ENCODE measurements at regions of chr5 and their contacts with region 1.

Region 1: DNA sequence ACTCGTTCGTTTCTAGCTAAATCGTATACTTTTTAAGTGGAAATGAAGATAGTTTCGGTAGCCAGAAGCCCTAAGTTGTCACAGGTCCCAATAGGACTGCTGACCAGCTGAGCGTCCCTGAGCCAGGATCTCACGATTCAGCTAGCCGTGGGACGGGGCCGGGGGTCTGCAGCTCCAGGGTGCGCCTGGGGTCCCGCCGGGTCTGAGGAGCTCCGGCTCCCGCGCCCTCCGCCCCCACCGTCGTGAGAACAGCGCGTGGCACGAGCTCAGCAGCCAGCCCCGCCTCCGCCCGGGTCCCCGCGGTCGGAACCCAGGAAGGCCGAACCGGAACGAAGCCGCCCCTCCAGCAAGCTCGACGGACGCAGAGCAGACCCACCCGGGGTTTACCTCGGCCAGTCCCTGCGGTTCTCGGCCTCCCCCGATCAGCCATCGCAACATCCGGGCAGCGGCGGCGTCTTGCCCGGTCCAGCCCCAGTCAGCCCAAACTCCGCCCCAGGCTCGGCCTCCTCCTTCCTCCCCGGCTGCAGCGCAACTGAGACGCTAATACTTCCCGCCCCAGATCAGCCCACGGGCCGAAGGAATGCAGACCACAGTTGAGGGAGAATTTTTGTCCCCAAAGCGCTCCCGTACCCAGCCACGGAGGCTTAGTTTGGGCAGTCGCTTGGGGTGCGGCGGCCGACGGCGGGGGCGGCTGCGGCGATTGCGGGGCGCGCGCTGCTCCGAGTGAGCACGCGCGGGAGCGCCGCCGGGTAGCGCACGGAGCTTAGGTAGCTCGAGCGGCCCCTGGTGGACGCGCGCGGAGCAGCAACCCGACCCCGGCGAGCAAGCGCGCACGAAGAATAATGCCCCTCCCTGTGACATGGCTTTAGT is at the start of gene WDR41:
- DNase-seq: peak; percentile 83
- H3K4me3 Mint-ChIP-seq: peak within 1 kb of the TSS; percentile 87
- H3K27ac Mint-ChIP-seq: peak within 1 kb of the TSS; percentile 91
- H3K4me1 Mint-ChIP-seq: peaks cover 35% of the 10 kb centered on the region
- H3K27me3 Mint-ChIP-seq: peaks cover 21% of the 10 kb centered on the region
- total RNA-seq, gene WDR41: 50.8 and 54.6 TPM in 2 replicates

Region 2: GRCh38 chr5:76867827-76868693 is 624.0 kb before region 1 on chr5:
- intact Hi-C with region 1: loop called (anchors 10 kb)
- DNase-seq: peak; percentile 49
- H3K4me3 Mint-ChIP-seq: no peak overlapping the region
- H3K27ac Mint-ChIP-seq: no peak overlapping the region
- H3K4me1 Mint-ChIP-seq: no peaks in the 10 kb centered on the region
- H3K27me3 Mint-ChIP-seq: no peaks in the 10 kb centered on the region

Region 3: GRCh38 chr5:77030097-77031071 is 461.6 kb before region 1 on chr5 and contains the start of gene AGGF1:
- intact Hi-C with region 1: loop called (anchors 2 kb)
- DNase-seq: peak; percentile 90
- H3K4me3 Mint-ChIP-seq: peak within 1 kb of the TSS; percentile 98
- H3K27ac Mint-ChIP-seq: peak within 1 kb of the TSS; percentile 92
- H3K4me1 Mint-ChIP-seq: peaks cover 22% of the 10 kb centered on the region
- H3K27me3 Mint-ChIP-seq: peaks cover 7% of the 10 kb centered on the region
- total RNA-seq, gene AGGF1: 25.6 and 28.2 TPM in 2 replicates

Region 4: DNA sequence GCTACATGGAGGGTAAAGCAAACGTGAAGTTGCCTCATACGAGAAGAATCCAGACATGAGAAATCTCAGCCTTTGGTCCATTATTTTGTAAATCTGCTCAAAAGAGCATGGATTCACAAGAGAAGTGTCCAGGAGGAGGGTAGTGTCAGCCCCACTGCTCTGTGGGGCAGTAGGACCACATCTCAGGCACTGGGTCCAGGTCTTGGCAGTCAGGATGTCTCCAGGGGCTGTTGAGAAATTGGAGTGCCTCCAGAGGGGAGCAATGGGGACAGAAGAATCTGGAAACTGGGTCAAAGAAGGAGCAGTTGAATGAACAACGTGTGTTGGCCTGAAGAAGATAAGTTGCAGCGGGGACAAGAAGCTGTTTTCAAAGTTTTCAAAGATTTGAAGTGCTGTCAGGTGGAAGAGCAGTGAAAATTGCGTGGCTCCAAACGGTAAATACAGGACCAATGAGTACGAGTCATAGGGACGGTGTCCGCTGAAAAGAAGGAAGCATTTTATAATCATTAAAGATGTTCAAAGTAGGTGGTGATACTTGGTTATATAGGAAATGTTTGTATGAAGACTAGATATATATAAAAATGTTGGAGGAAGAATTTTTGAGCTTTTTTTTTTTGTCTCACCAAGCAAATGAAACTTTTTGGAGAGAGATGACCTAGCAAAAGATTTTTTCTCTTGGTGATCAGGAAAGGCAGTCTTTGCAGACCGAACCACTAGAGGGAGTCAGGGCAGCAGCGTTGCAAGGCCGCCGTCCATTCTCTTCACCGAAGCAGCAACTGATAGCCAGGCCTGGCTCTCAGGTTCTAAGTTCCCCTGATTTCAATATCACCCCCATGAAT is 347.8 kb before region 1 on chr5:
- intact Hi-C with region 1: loop called (anchors 1 kb)
- DNase-seq: peak; percentile 45
- H3K4me3 Mint-ChIP-seq: no peak overlapping the region
- H3K27ac Mint-ChIP-seq: no peak overlapping the region
- H3K4me1 Mint-ChIP-seq: peaks cover 18% of the 10 kb centered on the region
- H3K27me3 Mint-ChIP-seq: peaks cover 20% of the 10 kb centered on the region

Region 5: GRCh38 chr5:77328930-77329647 is 162.9 kb before region 1 on chr5:
- intact Hi-C with region 1: loop called (anchors 2 kb)
- DNase-seq: no peak
- H3K4me3 Mint-ChIP-seq: peak overlapping the region; percentile 34
- H3K27ac Mint-ChIP-seq: peak overlapping the region; percentile 84
- H3K4me1 Mint-ChIP-seq: peaks cover 40% of the 10 kb centered on the region
- H3K27me3 Mint-ChIP-seq: peaks cover 5% of the 10 kb centered on the region

Region 6: DNA sequence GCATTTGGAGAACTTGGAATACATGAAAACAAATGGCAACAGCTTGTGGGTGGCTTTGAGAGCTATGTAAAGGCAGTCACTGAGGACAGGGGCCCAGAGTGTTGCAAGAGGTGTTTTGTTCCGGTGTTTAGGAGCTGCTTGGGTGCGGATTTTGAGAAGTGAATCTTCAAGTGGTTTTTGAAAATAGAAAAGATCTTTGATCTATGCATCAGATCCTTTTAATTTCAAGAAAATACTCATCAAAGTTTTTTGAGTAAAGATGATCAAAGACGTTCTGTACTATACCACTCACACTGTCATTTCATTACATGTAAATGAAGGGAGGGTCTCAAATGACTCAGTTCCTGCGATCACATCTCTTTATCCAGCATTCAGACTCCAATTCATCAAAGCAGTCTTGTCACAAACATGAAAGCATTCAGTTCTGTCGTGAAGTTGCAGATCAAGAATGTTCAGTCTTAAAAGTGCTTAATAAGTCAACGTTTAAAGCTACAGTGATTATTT is 112.4 kb before region 1 on chr5:
- intact Hi-C with region 1: loop called (anchors 2 kb)
- DNase-seq: peak; percentile 38
- H3K4me3 Mint-ChIP-seq: no peak overlapping the region
- H3K27ac Mint-ChIP-seq: peak overlapping the region; percentile 68
- H3K4me1 Mint-ChIP-seq: peaks cover 34% of the 10 kb centered on the region
- H3K27me3 Mint-ChIP-seq: no peaks in the 10 kb centered on the region

Region 7: DNA sequence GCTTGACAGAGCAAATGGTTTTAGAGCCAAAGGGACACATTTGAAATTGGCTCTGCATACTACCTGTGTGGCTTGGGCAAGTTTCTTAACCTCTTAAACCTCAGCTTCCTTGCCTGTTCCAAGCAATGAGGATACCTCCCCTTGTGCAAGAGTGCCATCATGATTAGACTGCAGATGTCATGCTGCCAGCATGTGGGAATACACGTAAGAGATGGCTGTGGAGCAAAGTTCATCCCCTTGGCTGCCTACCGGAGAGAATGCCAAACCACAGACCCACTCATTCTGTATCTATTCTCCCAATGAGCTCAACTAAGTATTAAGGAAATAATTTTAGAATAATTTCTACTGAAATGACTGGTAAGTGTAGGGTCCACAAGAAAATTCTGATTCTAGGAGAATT is 101.2 kb before region 1 on chr5:
- intact Hi-C with region 1: no loop called
- DNase-seq: no peak
- H3K4me3 Mint-ChIP-seq: no peak overlapping the region
- H3K27ac Mint-ChIP-seq: no peak overlapping the region
- H3K4me1 Mint-ChIP-seq: peaks cover under 1% of the 10 kb centered on the region
- H3K27me3 Mint-ChIP-seq: peaks cover 2% of the 10 kb centered on the region

Region 8: GRCh38 chr5:77452351-77452750 is 39.7 kb before region 1 on chr5:
- intact Hi-C with region 1: no loop called
- DNase-seq: no peak
- H3K4me3 Mint-ChIP-seq: no peak overlapping the region
- H3K27ac Mint-ChIP-seq: no peak overlapping the region
- H3K4me1 Mint-ChIP-seq: peaks cover 3% of the 10 kb centered on the region
- H3K27me3 Mint-ChIP-seq: no peaks in the 10 kb centered on the region

Region 9: GRCh38 chr5:77775790-77776553 is 284.0 kb after region 1 on chr5 and contains the start of gene TBCA:
- intact Hi-C with region 1: loop called (anchors 5 kb)
- DNase-seq: peak; percentile 91
- H3K4me3 Mint-ChIP-seq: peak within 1 kb of the TSS; percentile 90
- H3K27ac Mint-ChIP-seq: peak within 1 kb of the TSS; percentile 96
- H3K4me1 Mint-ChIP-seq: peaks cover 54% of the 10 kb centered on the region
- H3K27me3 Mint-ChIP-seq: no peaks in the 10 kb centered on the region
- total RNA-seq, gene TBCA: 260 and 267 TPM in 2 replicates

Measured in activated T-helper 2 cell treated with anti-CD3 and anti-CD28 coated beads, Interferon-gamma antibody, Interleukin-2, Interleukin-4, amounts not matched to agents 10 μg/mL and 5 μg/mL and 100 μg/mL, durations not matched to agents 14 hours and 24 hours and 36 hours (primary cell).